ENCODE measurements at regions of chr19 and their contacts with region 1.

Region 1: DNA sequence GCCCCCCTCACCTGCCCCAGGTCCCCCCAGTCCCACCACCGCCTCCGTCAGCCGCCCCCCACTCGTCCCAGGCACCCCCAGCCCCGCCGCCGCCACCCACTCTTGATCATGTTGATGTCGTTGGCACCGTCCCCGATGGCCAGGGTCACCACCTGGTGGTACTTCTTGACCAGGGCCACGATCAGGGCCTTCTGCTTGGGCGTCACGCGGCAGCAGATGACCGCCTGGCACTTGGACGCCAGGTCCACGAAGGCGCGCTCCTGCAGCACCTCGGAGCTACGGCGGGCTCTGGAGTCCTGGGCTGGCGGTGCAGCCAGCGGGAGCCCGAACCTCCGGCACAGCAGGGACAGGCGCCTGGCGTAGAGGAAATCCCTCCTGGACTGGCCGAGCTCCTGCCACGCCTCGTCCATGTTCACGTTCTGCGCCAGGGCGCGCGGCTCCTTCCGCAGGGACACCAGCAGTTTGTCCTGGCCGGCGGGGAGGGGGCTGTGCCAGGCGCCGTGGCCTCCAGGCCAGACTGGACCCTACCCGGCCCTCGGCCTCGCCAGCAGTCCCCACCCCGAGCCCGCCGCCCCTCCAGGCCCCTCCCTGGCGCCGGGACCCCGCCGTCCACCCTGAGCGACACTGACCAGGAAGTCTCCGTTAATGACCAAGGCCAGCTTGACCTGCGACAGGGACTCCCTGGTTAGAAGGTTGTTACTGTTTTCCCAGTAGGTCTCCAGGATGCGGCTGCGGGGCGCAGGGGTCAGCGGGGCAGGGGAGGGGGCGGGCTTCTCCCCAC is 22.6 kb downstream of the ATP8B3 start:
- DNase-seq: no peak
- H3K27ac ChIP-seq: no peak overlapping the region
- CTCF ChIP-seq: no peak

Region 2: DNA sequence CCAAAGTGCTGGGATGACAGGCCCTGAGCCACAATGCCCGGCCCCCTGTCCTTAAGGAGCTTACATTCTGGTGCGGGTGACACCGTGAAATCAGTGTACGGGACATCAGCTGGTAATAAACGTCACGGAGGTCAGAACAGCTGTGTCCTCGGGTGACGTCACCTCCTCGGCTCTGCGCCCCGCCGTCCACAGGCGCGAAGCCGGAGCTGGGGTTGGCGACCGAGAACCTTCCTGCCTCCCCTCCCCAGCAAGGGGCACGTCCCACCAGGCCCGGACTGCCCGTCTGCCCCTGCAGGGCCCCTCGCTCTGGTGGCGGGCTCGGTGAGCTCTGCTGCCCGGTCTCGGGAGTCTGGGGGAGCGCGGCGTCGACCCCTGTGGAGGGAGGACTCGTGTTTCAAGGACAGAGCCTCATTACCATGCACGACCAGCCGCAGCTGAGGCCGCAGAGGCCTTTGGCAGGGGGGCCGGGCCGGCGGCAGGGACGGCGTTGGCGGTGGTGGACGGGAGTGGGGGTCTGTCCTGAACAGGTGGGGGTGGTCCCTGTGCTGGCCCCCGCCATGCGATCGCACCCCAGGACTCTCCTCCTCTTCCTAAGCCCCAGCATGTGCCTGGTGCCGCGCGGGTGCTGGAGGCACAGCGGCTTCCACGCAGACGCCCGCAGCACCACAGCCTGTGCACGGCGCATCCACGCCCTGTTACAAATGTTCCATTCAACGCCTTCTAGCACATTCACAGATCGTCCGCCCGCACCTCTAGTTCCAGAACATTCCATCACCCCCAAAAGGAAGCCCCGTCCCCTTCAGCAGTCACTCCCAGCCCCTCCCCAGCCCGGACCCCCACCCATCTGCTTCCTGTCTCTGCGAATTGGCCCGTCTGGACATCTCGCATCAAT is 513.1 kb after region 1 on chr19:
- CTCF ChIA-PET with region 1: no interaction called
- POLR2A ChIA-PET with region 1: no interaction called
- DNase-seq: no peak
- H3K27ac ChIP-seq: no peak overlapping the region
- CTCF ChIP-seq: no peak

Region 3: GRCh38 chr19:3047425-3048189 is 1258.2 kb after region 1 on chr19:
- CTCF ChIA-PET with region 1: interaction called, 11 read pairs
- POLR2A ChIA-PET with region 1: no interaction called
- DNase-seq: peak; percentile 45
- H3K27ac ChIP-seq: peak overlapping the region; percentile 76
- CTCF ChIP-seq: no peak